ENCODE measurements at regions of chr1 and their contacts with region 1.

Region 1: GRCh38 chr1:33127001-33127791 is 46.2 kb downstream of the AZIN2 start:
- DNase-seq: peak; percentile 94 to 100 (median 98)
- ATAC-seq: peak; percentile 90 to 96 (median 93)
- H3K4me3 ChIP-seq: peak overlapping the region; percentile 93
- H3K4me3 Mint-ChIP-seq: peak overlapping the region; percentile 86 to 93 (median 93)
- H3K27ac ChIP-seq: peak overlapping the region; percentile 93
- H3K27ac Mint-ChIP-seq: peak overlapping the region; percentile 96
- H3K4me1 ChIP-seq: peaks cover 19 to 27% of the 10 kb centered on the region in 2 experiments
- H3K4me1 Mint-ChIP-seq: peaks cover 38 to 58% (median 56%) of the 10 kb centered on the region in 3 donors
- H3K27me3 ChIP-seq: no peaks in the 10 kb centered on the region
- H3K27me3 Mint-ChIP-seq: no peaks in the 10 kb centered on the region

Region 2: DNA sequence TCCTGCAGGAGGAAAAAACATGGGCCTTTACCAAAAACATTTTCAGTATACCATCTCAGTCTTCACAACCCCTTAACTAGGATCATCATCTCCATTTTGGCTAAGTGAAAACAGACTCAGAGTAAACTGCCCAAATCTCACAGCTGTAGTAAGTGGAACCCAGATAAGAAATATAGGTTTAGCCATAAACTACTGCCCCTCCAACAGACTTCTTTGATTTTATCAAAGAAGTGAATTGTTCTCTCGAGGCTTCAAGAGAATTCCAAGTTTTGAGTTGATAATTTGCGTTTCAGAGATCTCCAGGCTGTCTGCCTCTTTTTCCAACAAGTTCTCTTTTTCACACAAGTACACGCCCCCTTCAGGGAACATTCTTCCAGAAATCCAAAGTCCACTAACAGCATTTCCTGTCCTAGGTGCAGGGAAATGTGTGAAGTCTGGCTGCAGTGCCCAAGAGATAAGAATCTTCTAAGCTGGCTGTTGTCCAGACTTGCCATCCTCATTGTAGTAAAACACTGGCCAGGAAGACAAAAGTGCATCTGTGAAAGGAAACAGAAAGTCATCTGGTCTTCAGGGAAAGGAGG is 193.4 kb before region 1 on chr1:
- CTCF ChIA-PET with region 1: interaction called in 1 of 2 experiments, 7 read pairs
- POLR2A ChIA-PET with region 1: interaction called in 1 of 2 experiments, 11 read pairs
- DNase-seq: no peak
- ATAC-seq: no peak
- H3K4me3 ChIP-seq: no peak overlapping the region
- H3K4me3 Mint-ChIP-seq: no peak overlapping the region
- H3K27ac ChIP-seq: no peak overlapping the region
- H3K27ac Mint-ChIP-seq: peak overlapping the region in 1 of 2 donors; percentile 5
- H3K4me1 ChIP-seq: no peaks in the 10 kb centered on the region
- H3K4me1 Mint-ChIP-seq: no peaks in the 10 kb centered on the region
- H3K27me3 ChIP-seq: no peaks in the 10 kb centered on the region
- H3K27me3 Mint-ChIP-seq: no peaks in the 10 kb centered on the region

Region 3: DNA sequence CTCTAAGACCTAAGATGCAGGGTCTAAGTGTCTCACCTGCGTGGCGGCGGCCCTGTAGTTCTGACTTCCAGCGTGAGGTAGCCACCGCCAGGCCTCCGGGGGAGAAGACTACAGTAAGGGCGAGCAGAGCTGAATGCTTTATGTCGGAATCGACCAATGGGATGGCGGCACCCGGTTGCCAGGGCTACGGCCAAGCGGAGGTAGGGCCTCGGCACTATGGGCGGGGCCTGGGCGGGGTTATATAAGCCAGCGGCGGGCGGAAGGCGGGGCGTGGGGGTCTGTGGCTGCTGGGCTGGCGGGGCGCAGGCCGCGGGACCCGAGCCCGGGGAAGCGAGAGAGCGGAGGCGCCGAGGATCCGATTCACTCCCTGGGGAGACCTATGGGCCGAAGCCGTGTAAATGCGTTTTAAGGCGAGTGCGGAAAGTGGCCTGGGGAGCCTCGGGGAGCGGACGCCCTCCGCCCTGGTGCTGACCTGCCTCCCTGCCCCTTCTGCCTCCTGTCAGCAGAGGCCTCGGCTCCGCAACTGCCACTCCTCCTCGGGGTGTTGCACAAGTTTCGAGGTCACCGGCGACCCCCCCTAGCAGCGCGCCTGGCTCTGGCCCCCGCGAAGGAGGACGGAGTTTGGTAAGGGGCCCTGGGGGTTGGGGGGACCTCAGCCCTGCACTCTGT is 46.2 kb before region 1 on chr1 and contains the start of gene AZIN2:
- CTCF ChIA-PET with region 1: interaction called in 1 of 2 experiments, 12 read pairs
- POLR2A ChIA-PET with region 1: interaction called in 1 of 2 experiments, 4 read pairs
- DNase-seq: peak; percentile 91 to 100 (median 98)
- ATAC-seq: peak; percentile 98 to 100 (median 98)
- H3K4me3 ChIP-seq: peak within 1 kb of the TSS; percentile 76 to 82
- H3K4me3 Mint-ChIP-seq: peak within 1 kb of the TSS; percentile 77 to 84 (median 83)
- H3K27ac ChIP-seq: peak within 1 kb of the TSS; percentile 42
- H3K27ac Mint-ChIP-seq: peak within 1 kb of the TSS; percentile 55 to 70
- H3K4me1 ChIP-seq: peaks cover 8 to 28% of the 10 kb centered on the region in 2 experiments
- H3K4me1 Mint-ChIP-seq: peaks cover 27 to 43% (median 30%) of the 10 kb centered on the region in 3 donors
- H3K27me3 ChIP-seq: peaks cover 0 to 5% of the 10 kb centered on the region in 2 experiments
- H3K27me3 Mint-ChIP-seq: no peaks in the 10 kb centered on the region
- total RNA-seq, gene AZIN2: 5.6 to 10.7 (median 9.7) TPM

Region 4: GRCh38 chr1:33099290-33100118 is 27.7 kb before region 1 on chr1:
- CTCF ChIA-PET with region 1: interaction called in 1 of 2 experiments, 26 read pairs
- POLR2A ChIA-PET with region 1: interaction called in 1 of 2 experiments, 11 read pairs
- DNase-seq: peak; percentile 51 to 86 (median 68)
- ATAC-seq: peak; percentile 92 to 97 (median 94)
- H3K4me3 ChIP-seq: peak overlapping the region; percentile 5 to 29
- H3K4me3 Mint-ChIP-seq: peak overlapping the region; percentile 49 to 79 (median 53)
- H3K27ac ChIP-seq: peak overlapping the region; percentile 65
- H3K27ac Mint-ChIP-seq: peak overlapping the region; percentile 92 to 98
- H3K4me1 ChIP-seq: peaks cover 28 to 43% of the 10 kb centered on the region in 2 experiments
- H3K4me1 Mint-ChIP-seq: peaks cover 49 to 70% (median 57%) of the 10 kb centered on the region in 3 donors
- H3K27me3 ChIP-seq: no peaks in the 10 kb centered on the region
- H3K27me3 Mint-ChIP-seq: no peaks in the 10 kb centered on the region

Region 5: DNA sequence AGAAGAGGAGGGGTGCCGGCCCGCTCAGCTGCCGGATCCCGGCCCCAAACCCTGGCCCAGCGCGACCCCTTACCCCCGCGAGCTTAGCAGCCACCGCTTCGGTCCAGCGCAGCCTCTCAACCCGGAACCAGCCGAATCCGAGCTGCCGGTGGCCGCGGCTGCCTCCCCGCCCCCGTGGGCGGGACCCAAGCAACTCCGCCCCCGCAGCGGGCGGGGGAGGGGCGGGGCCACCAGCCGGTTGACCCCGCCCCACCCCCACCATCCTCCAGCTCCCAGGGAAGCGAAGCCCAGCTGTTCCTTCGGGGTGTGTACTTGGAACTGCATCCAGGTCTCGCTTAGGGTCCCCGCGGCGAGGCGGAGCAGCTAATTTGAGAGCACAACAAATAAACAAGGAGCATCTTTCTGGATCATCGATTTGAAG is 54.7 kb after region 1 on chr1 and contains the start of gene TRIM62:
- CTCF ChIA-PET with region 1: interaction called, 3 to 24 read pairs
- POLR2A ChIA-PET with region 1: interaction called, 5 to 6 read pairs
- DNase-seq: peak; percentile 37 to 84 (median 65)
- ATAC-seq: peak; percentile 69 to 77 (median 72)
- H3K4me3 ChIP-seq: peak within 1 kb of the TSS; percentile 70 to 84
- H3K4me3 Mint-ChIP-seq: peak within 1 kb of the TSS; percentile 84 to 90 (median 85)
- H3K27ac ChIP-seq: no peak within 1 kb of the TSS
- H3K27ac Mint-ChIP-seq: peak within 1 kb of the TSS; percentile 85 to 86
- H3K4me1 ChIP-seq: peaks cover 0 to 24% of the 10 kb centered on the region in 2 experiments
- H3K4me1 Mint-ChIP-seq: peaks cover 32 to 38% (median 34%) of the 10 kb centered on the region in 3 donors
- H3K27me3 ChIP-seq: peaks cover 0 to 3% of the 10 kb centered on the region in 2 experiments
- H3K27me3 Mint-ChIP-seq: peaks cover 3 to 9% of the 10 kb centered on the region in 2 donors
- total RNA-seq, gene TRIM62: 20.3 to 31.8 (median 24.3) TPM

Region 6: GRCh38 chr1:33349778-33350610 is 222.8 kb after region 1 on chr1:
- CTCF ChIA-PET with region 1: no interaction called
- POLR2A ChIA-PET with region 1: no interaction called
- DNase-seq: peak; percentile 48 to 89 (median 71)
- ATAC-seq: peak; percentile 86 to 88 (median 88)
- H3K4me3 ChIP-seq: peak overlapping the region; percentile 70 to 87
- H3K4me3 Mint-ChIP-seq: peak overlapping the region; percentile 87 to 88 (median 87)
- H3K27ac ChIP-seq: peak overlapping the region; percentile 48
- H3K27ac Mint-ChIP-seq: peak overlapping the region; percentile 87 to 91
- H3K4me1 ChIP-seq: peaks cover 22 to 29% of the 10 kb centered on the region in 2 experiments
- H3K4me1 Mint-ChIP-seq: peaks cover 39 to 49% (median 48%) of the 10 kb centered on the region in 3 donors
- H3K27me3 ChIP-seq: no peaks in the 10 kb centered on the region
- H3K27me3 Mint-ChIP-seq: no peaks in the 10 kb centered on the region